ENCODE measurements at regions of chr22 and their contacts with region 1.

Region 1: DNA sequence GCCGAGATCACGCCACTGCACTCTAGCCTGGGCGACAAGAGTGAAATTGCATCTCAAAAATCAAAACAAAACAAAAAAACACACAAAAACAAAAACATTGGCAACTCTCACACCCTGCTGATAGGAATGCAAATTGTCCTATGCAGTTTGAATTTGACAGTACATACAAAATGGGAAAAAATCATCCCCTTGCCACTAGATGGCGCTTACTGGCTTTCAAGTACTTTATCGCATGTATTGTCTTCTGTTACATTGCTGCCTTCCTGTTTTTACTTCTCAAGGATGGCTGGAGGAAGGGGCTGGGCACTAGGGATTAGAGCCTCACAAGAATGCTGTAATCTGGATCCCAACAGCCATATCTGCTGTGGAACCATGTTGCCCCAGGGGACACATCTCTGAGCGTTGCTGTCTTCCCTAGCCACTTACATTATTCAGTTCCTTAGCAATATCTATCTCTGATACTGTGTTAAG is 59.4 kb upstream of the A4GALT start:
- DNase-seq: peak; percentile 80
- ATAC-seq: peak; percentile 97
- H3K4me3 ChIP-seq: no peak overlapping the region
- H3K27ac ChIP-seq: no peak overlapping the region
- H3K4me1 ChIP-seq: no peaks in the 10 kb centered on the region
- H3K27me3 ChIP-seq: no peaks in the 10 kb centered on the region
- CTCF ChIP-seq: peak; percentile 81

Region 2: DNA sequence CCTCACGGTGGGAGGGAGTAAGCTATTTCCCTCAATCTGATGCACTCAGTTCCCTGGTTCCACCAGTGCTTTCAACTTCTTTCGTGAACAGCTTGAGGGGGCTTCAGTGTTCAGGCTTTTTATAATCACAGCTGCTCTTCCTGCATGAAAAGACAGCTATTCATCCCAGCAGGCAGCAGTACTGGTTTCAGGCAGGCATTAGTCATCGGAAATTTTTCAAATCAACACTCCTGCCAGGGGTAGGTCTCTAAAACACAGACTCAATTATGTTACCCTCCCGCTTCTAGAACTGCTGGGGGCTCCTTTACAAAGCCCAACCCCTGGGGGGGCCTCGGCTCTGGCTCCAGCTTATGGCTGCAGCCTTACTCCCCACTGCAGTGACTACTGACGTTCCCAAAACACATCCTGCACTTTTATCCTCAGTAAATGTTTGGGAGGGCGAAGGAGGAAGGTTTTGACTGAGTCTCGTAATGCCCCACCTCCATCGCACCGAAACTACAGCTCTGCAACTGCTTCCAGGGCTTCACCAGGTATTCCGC is 171.2 kb before region 1 on chr22:
- CTCF ChIA-PET with region 1: no interaction called
- POLR2A ChIA-PET with region 1: no interaction called
- in situ Hi-C with region 1: no loop called
- intact Hi-C with region 1: no loop called
- DNase-seq: no peak
- ATAC-seq: peak; percentile 69
- H3K4me3 ChIP-seq: no peak overlapping the region
- H3K27ac ChIP-seq: peak overlapping the region; percentile 59
- H3K4me1 ChIP-seq: peaks cover 38% of the 10 kb centered on the region
- H3K27me3 ChIP-seq: no peaks in the 10 kb centered on the region
- CTCF ChIP-seq: no peak

Region 3: DNA sequence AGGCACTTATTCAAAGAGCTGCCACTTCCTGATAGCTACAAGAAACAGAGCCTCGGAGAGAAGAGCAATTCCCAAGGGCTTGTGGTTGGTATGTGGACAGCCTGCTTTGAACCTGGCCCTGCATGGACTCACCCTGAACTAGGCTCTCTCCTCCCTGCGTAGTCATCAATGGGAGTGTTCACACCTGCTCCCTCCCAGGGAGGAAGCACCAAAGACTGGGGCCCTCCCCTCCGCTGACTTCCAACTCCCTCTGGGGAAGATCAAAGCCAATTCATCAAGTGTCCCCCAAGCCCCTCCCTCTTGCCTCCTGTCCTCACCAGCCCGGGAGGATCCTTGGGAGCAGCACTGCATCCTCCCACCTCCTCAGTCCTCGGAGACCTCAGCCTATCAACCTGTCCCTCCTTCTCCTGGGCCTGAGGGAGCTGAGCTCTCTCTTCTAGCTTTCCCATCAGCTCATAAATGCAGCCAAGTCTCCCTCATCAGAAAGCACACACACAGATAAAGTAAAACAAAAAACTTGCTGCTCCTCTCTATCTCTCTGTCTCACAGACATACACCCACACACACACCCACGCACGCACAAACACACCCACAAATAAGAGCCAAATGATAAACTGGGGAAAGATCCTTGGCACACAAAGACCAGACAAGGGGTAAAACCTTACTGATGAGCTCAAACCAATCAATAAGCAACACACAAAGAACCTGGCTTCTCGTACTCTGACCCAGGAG is 62.7 kb before region 1 on chr22:
- CTCF ChIA-PET with region 1: interaction called, 4 read pairs
- POLR2A ChIA-PET with region 1: interaction called, 12 read pairs
- in situ Hi-C with region 1: no loop called
- intact Hi-C with region 1: no loop called
- DNase-seq: no peak
- ATAC-seq: no peak
- H3K4me3 ChIP-seq: no peak overlapping the region
- H3K27ac ChIP-seq: no peak overlapping the region
- H3K4me1 ChIP-seq: peaks cover 2% of the 10 kb centered on the region; the same call in 1 of the 2 replicates
- H3K27me3 ChIP-seq: no peaks in the 10 kb centered on the region
- CTCF ChIP-seq: no peak

Region 4: GRCh38 chr22:42800451-42801251 is 20.5 kb after region 1 on chr22:
- CTCF ChIA-PET with region 1: no interaction called
- POLR2A ChIA-PET with region 1: interaction called, 13 read pairs
- in situ Hi-C with region 1: no loop called
- intact Hi-C with region 1: no loop called
- DNase-seq: no peak
- ATAC-seq: no peak
- H3K4me3 ChIP-seq: no peak overlapping the region
- H3K27ac ChIP-seq: no peak overlapping the region
- H3K4me1 ChIP-seq: peaks cover under 1% of the 10 kb centered on the region; the same call in 1 of the 2 replicates
- H3K27me3 ChIP-seq: no peaks in the 10 kb centered on the region
- CTCF ChIP-seq: no peak

Region 5: DNA sequence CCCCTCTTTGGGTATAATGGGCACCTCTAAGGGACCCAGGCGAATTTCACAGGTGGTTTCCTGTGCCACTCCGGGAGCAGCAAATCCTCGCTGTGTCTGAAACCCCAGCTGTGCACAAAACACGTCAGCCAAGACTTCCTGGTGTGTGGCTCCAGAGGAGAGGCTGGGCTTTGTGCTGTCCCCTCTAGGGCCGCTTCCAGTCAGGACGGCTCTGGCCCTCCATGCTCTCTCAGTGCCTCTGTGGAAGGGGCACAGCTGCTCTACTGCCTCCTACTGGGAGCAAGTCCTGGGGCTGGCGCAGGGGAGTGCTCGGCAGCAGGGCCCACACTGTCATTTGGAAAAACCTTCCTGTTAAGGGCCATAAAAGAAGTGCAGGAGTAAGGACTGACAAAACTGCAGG is 100.7 kb after region 1 on chr22:
- CTCF ChIA-PET with region 1: no interaction called
- POLR2A ChIA-PET with region 1: no interaction called
- in situ Hi-C with region 1: no loop called
- intact Hi-C with region 1: no loop called
- DNase-seq: no peak
- ATAC-seq: no peak
- H3K4me3 ChIP-seq: no peak overlapping the region
- H3K27ac ChIP-seq: no peak overlapping the region
- H3K4me1 ChIP-seq: no peaks in the 10 kb centered on the region
- H3K27me3 ChIP-seq: no peaks in the 10 kb centered on the region
- CTCF ChIP-seq: no peak

Measured in Panc1 (cell line).